MCF 10A (cell line): ENCODE measurements at regions of chr10 and their contacts with region 1.

Region 1: DNA sequence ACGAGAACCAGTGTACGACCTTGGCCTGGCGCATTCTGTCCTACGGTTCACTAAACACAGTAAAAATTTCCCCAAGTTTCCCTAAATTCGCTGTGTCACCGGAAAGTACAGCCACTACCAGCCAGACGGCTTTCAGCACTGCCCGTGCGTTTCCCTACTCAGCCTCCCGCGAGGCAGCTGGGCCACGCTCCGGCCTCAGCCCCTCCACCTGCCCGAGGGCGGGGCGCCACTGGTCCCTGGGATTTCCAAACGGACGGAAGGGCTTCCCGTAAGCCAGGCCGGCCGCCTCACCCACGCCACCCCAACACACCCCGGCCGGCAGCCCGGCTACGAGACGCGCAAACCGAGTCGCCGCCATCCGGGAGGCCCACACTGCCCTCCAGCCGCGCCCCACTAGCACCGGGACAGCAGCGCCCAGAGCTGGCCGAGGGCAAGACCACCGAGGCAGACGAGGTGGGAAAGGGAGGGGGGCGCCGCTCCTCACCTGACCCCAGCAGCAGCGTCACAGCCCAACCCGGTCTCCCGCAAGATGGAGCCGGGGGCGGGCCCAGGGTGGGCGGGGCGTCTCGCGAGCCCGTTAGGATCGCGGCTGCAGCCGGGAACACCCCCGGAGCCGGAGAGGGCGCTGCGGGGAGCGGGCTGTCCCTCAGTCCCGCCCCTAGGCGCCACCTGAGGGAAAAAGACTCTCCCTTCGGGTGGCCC is at the start of gene ANXA7:
- DNase-seq: peak; percentile 91
- H3K4me3 Mint-ChIP-seq: peak within 1 kb of the TSS; percentile 98
- H3K27ac Mint-ChIP-seq: peak within 1 kb of the TSS; percentile 95
- H3K4me1 Mint-ChIP-seq: peaks cover 17% of the 10 kb centered on the region
- H3K27me3 Mint-ChIP-seq: no peaks in the 10 kb centered on the region
- CTCF ChIP-seq: peak; percentile 5
- total RNA-seq, gene ANXA7: 137 and 161 TPM in 2 replicates

Region 2: GRCh38 chr10:73246783-73247508 is 166.7 kb before region 1 on chr10 and contains the start of gene DNAJC9:
- CTCF ChIA-PET with region 1: interaction called, 3 read pairs
- POLR2A ChIA-PET with region 1: interaction called, 47 read pairs
- intact Hi-C with region 1: loop called (anchors 2 kb)
- DNase-seq: peak; percentile 96
- H3K4me3 Mint-ChIP-seq: peak within 1 kb of the TSS; percentile 91
- H3K27ac Mint-ChIP-seq: peak within 1 kb of the TSS; percentile 95
- H3K4me1 Mint-ChIP-seq: peaks cover 30% of the 10 kb centered on the region
- H3K27me3 Mint-ChIP-seq: no peaks in the 10 kb centered on the region
- CTCF ChIP-seq: peak; percentile 6
- total RNA-seq, gene DNAJC9: 33.1 and 35.1 TPM in 2 replicates

Region 3: GRCh38 chr10:73252445-73253224 is 161.0 kb before region 1 on chr10 and contains the start of gene MRPS16:
- CTCF ChIA-PET with region 1: interaction called, 3 read pairs
- POLR2A ChIA-PET with region 1: interaction called, 47 read pairs
- intact Hi-C with region 1: loop called (anchors 2 kb)
- DNase-seq: peak; percentile 98
- H3K4me3 Mint-ChIP-seq: peak within 1 kb of the TSS; percentile 90
- H3K27ac Mint-ChIP-seq: peak within 1 kb of the TSS; percentile 94
- H3K4me1 Mint-ChIP-seq: peaks cover 9% of the 10 kb centered on the region
- H3K27me3 Mint-ChIP-seq: no peaks in the 10 kb centered on the region
- CTCF ChIP-seq: no peak
- total RNA-seq, gene MRPS16: 203 and 247 TPM in 2 replicates

Region 4: GRCh38 chr10:73358331-73359279 is 55.1 kb before region 1 on chr10 and contains the start of gene CFAP70:
- CTCF ChIA-PET with region 1: interaction called, 3 read pairs
- POLR2A ChIA-PET with region 1: interaction called, 14 read pairs
- intact Hi-C with region 1: no loop called
- DNase-seq: peak; percentile 88
- H3K4me3 Mint-ChIP-seq: peak within 1 kb of the TSS; percentile 96
- H3K27ac Mint-ChIP-seq: peak within 1 kb of the TSS; percentile 98
- H3K4me1 Mint-ChIP-seq: peaks cover 11% of the 10 kb centered on the region
- H3K27me3 Mint-ChIP-seq: no peaks in the 10 kb centered on the region
- CTCF ChIP-seq: no peak
- total RNA-seq, gene CFAP70: 1.5 and 2.9 TPM in 2 replicates

Region 5: GRCh38 chr10:73399063-73399462 is 14.6 kb before region 1 on chr10:
- CTCF ChIA-PET with region 1: interaction called, 4 read pairs
- POLR2A ChIA-PET with region 1: interaction called, 30 read pairs
- intact Hi-C with region 1: no loop called
- DNase-seq: no peak
- H3K4me3 Mint-ChIP-seq: no peak overlapping the region
- H3K27ac Mint-ChIP-seq: no peak overlapping the region
- H3K4me1 Mint-ChIP-seq: no peaks in the 10 kb centered on the region
- H3K27me3 Mint-ChIP-seq: no peaks in the 10 kb centered on the region
- CTCF ChIP-seq: no peak

Region 6: GRCh38 chr10:73495884-73496674 is 82.4 kb after region 1 on chr10 and contains the start of gene PPP3CB:
- CTCF ChIA-PET with region 1: interaction called, 3 read pairs
- POLR2A ChIA-PET with region 1: interaction called, 77 read pairs
- intact Hi-C with region 1: loop called (anchors 2 kb)
- DNase-seq: peak; percentile 95
- H3K4me3 Mint-ChIP-seq: peak within 1 kb of the TSS; percentile 86
- H3K27ac Mint-ChIP-seq: peak within 1 kb of the TSS; percentile 74
- H3K4me1 Mint-ChIP-seq: peaks cover 28% of the 10 kb centered on the region
- H3K27me3 Mint-ChIP-seq: no peaks in the 10 kb centered on the region
- CTCF ChIP-seq: no peak
- total RNA-seq, gene PPP3CB: 34.8 and 37.4 TPM in 2 replicates

Region 7: GRCh38 chr10:73644015-73644743 is 230.5 kb after region 1 on chr10:
- CTCF ChIA-PET with region 1: no interaction called
- POLR2A ChIA-PET with region 1: interaction called, 3 read pairs
- intact Hi-C with region 1: loop called (anchors 5 kb)
- DNase-seq: peak; percentile 75
- H3K4me3 Mint-ChIP-seq: no peak overlapping the region
- H3K27ac Mint-ChIP-seq: no peak overlapping the region
- H3K4me1 Mint-ChIP-seq: peaks cover 7% of the 10 kb centered on the region
- H3K27me3 Mint-ChIP-seq: no peaks in the 10 kb centered on the region
- CTCF ChIP-seq: peak; percentile 85